ENCODE measurements at regions of chr17 and their contacts with region 1.

Region 1: GRCh38 chr17:44556832-44557606 is at the start of gene FZD2:
- DNase-seq: peak; percentile 98
- H3K4me3 ChIP-seq: peak within 1 kb of the TSS; percentile 83
- H3K27ac ChIP-seq: peak within 1 kb of the TSS; percentile 99
- H3K27me3 ChIP-seq: no peaks in the 10 kb centered on the region
- CTCF ChIP-seq: no peak
- polyA plus RNA-seq, gene FZD2: 49.4 and 73.4 TPM in 2 replicates

Region 2: DNA sequence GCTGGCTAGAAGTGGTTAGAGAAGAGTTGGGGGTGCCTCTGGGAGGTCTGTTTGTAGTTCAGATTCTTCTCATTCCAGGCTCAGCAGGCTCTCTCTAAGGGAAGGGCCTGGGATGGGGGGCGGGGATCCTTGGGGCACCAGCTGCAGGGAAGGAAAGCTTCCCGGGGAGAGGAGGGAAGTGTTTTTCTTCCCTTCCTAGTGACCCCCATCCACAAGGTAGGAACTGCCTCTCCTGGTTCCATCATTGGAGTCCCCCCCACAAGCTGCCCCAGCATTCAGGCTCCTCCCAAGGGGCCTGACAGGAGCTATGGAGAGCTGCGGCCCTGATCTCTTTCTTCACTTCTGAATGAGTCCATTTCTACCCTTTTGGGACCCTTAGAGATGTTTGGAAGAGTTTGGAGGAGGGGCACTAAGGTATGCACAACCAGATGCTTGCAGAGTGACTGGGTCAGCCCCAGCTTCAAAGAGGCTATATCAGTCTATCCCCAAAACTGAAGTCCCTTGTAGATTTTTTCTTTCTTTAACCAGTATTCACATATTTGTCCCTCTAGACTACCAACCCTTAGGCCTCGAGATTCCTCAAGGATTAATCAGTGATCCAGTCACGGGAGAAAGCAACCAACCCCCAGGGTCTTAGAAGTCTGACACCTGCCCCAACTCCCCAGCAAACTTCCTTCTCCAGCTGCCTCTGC is 13.7 kb before region 1 on chr17:
- CTCF ChIA-PET with region 1: interaction called, 3 read pairs
- POLR2A ChIA-PET with region 1: interaction called, 143 read pairs
- DNase-seq: peak; percentile 88
- H3K4me3 ChIP-seq: peak overlapping the region; percentile 39
- H3K27ac ChIP-seq: peak overlapping the region; percentile 99
- H3K27me3 ChIP-seq: no peaks in the 10 kb centered on the region
- CTCF ChIP-seq: no peak

Region 3: GRCh38 chr17:44607836-44608690 is 51.0 kb after region 1 on chr17:
- CTCF ChIA-PET with region 1: no interaction called
- POLR2A ChIA-PET with region 1: interaction called, 11 read pairs
- DNase-seq: peak; percentile 37
- H3K4me3 ChIP-seq: no peak overlapping the region
- H3K27ac ChIP-seq: no peak overlapping the region
- H3K27me3 ChIP-seq: no peaks in the 10 kb centered on the region
- CTCF ChIP-seq: no peak

Measured in AG04450 (cell line).